Activated CD8-positive, alpha-beta memory T cell treated with anti-CD3 and anti-CD28 coated beads, Interleukin-2, amount 10 ng/mL, durations not matched to agents 7 days and 5 days (primary cell): ENCODE measurements at regions of chr6 and their contacts with region 1.

Region 1: GRCh38 chr6:27893059-27893835 is 18.9 kb downstream of the OR2B2 start:
- DNase-seq: peak; percentile 97
- ATAC-seq: peak; percentile 52
- H3K4me3 Mint-ChIP-seq: no peak overlapping the region
- H3K27ac Mint-ChIP-seq: no peak overlapping the region
- H3K4me1 Mint-ChIP-seq: peaks cover 54% of the 10 kb centered on the region
- H3K27me3 Mint-ChIP-seq: peaks cover 8% of the 10 kb centered on the region

Region 2: GRCh38 chr6:27706431-27706830 is 186.8 kb before region 1 on chr6:
- CTCF ChIA-PET with region 1: no interaction called
- DNase-seq: no peak
- ATAC-seq: no peak
- H3K4me3 Mint-ChIP-seq: no peak overlapping the region
- H3K27ac Mint-ChIP-seq: no peak overlapping the region
- H3K4me1 Mint-ChIP-seq: peaks cover 3% of the 10 kb centered on the region
- H3K27me3 Mint-ChIP-seq: no peaks in the 10 kb centered on the region

Region 3: GRCh38 chr6:27772261-27773001 is 120.8 kb before region 1 on chr6:
- CTCF ChIA-PET with region 1: interaction called, 37 read pairs
- DNase-seq: peak; percentile 92
- ATAC-seq: peak; percentile 99
- H3K4me3 Mint-ChIP-seq: peak overlapping the region; percentile 55
- H3K27ac Mint-ChIP-seq: peak overlapping the region; percentile 69
- H3K4me1 Mint-ChIP-seq: peaks cover 26% of the 10 kb centered on the region
- H3K27me3 Mint-ChIP-seq: peaks cover 34% of the 10 kb centered on the region

Region 4: GRCh38 chr6:27795697-27796494 is 97.4 kb before region 1 on chr6:
- CTCF ChIA-PET with region 1: interaction called, 13 read pairs
- DNase-seq: peak; percentile 54
- ATAC-seq: peak; percentile 62
- H3K4me3 Mint-ChIP-seq: no peak overlapping the region
- H3K27ac Mint-ChIP-seq: peak overlapping the region; percentile 60
- H3K4me1 Mint-ChIP-seq: peaks cover 43% of the 10 kb centered on the region
- H3K27me3 Mint-ChIP-seq: peaks cover 10% of the 10 kb centered on the region

Region 5: DNA sequence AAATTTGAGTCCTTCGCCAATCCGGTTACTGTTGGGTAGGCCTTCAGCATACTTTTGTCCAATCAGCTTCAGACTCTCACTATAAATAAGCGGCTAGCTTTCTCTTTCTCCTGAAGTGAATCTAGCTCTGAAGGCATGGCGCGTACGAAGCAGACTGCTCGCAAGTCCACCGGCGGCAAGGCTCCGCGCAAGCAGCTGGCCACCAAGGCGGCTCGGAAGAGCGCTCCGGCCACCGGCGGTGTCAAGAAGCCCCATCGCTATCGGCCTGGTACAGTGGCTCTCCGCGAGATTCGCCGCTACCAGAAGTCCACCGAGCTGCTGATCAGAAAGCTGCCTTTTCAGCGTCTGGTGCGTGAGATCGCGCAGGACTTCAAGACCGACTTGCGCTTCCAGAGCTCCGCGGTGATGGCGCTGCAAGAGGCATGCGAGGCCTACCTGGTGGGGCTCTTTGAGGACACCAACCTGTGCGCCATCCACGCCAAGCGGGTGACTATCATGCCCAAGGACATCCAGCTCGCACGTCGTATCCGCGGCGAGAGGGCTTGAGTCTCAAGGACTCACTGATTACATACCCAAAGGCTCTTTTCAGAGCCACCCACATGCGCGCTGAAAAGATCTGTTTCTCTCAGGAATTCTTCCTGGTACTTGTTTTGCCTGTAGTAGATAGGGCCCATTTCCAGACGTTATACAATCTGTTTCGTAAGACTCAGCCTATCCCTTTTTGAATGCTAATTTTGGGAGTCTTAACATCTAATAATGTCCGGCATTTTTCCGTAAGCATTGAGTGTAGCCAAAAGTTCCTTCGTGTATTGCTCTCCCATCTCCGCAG is 83.1 kb before region 1 on chr6:
- CTCF ChIA-PET with region 1: interaction called, 70 read pairs
- DNase-seq: peak; percentile 86
- ATAC-seq: peak; percentile 31
- H3K4me3 Mint-ChIP-seq: peak overlapping the region; percentile 94
- H3K27ac Mint-ChIP-seq: peak overlapping the region; percentile 95
- H3K4me1 Mint-ChIP-seq: peaks cover 64% of the 10 kb centered on the region
- H3K27me3 Mint-ChIP-seq: peaks cover 6% of the 10 kb centered on the region

Region 6: GRCh38 chr6:27825025-27825793 is 68.0 kb before region 1 on chr6:
- CTCF ChIA-PET with region 1: interaction called, 86 read pairs
- DNase-seq: no peak
- ATAC-seq: peak; percentile 5
- H3K4me3 Mint-ChIP-seq: peak overlapping the region; percentile 78
- H3K27ac Mint-ChIP-seq: peak overlapping the region; percentile 100
- H3K4me1 Mint-ChIP-seq: peaks cover 39% of the 10 kb centered on the region
- H3K27me3 Mint-ChIP-seq: peaks cover 3% of the 10 kb centered on the region

Region 7: DNA sequence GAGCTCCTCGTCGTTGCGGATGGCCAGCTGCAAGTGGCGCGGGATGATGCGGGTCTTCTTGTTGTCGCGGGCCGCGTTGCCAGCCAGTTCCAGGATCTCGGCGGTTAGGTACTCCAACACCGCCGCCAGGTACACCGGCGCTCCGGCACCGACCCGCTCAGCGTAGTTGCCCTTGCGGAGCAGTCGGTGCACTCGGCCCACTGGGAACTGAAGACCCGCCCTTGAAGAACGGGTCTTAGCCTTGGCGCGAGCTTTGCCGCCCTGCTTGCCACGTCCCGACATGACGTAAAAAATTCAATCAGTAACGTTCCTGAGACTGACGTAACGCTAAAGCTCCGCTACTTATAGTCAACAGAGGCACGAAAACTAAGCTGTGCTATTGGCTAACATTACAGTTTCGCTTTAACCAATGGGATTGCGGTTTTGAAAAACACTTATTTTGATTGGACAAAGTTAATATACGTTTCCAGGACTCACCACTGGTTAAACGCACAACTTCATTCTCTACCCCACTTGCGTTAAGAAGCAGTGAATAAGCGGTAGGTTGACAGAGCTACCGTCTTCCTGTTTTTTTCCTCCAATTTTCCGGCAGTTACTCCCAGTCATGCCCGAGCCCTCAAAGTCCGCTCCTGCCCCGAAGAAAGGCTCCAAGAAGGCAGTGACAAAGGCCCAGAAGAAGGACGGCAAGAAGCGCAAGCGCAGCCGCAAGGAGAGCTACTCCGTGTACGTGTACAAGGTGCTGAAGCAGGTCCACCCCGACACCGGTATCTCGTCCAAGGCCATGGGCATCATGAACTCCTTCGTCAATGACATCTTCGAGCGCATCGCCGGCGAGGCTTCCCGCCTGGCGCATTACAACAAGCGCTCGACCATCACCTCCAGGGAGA is 54.9 kb before region 1 on chr6:
- CTCF ChIA-PET with region 1: interaction called, 17 read pairs
- DNase-seq: peak; percentile 94
- ATAC-seq: peak; percentile 75
- H3K4me3 Mint-ChIP-seq: no peak overlapping the region
- H3K27ac Mint-ChIP-seq: no peak overlapping the region
- H3K4me1 Mint-ChIP-seq: peaks cover 33% of the 10 kb centered on the region
- H3K27me3 Mint-ChIP-seq: no peaks in the 10 kb centered on the region

Region 8: GRCh38 chr6:27864906-27865849 is 28.1 kb before region 1 on chr6:
- CTCF ChIA-PET with region 1: interaction called, 183 read pairs
- DNase-seq: peak; percentile 91
- ATAC-seq: peak; percentile 63
- H3K4me3 Mint-ChIP-seq: peak overlapping the region; percentile 89
- H3K27ac Mint-ChIP-seq: peak overlapping the region; percentile 100
- H3K4me1 Mint-ChIP-seq: peaks cover 51% of the 10 kb centered on the region
- H3K27me3 Mint-ChIP-seq: peaks cover 20% of the 10 kb centered on the region